CD4-positive, alpha-beta memory T cell (primary cell): ENCODE measurements at regions of chr2 and their contacts with region 1.

Region 1: DNA sequence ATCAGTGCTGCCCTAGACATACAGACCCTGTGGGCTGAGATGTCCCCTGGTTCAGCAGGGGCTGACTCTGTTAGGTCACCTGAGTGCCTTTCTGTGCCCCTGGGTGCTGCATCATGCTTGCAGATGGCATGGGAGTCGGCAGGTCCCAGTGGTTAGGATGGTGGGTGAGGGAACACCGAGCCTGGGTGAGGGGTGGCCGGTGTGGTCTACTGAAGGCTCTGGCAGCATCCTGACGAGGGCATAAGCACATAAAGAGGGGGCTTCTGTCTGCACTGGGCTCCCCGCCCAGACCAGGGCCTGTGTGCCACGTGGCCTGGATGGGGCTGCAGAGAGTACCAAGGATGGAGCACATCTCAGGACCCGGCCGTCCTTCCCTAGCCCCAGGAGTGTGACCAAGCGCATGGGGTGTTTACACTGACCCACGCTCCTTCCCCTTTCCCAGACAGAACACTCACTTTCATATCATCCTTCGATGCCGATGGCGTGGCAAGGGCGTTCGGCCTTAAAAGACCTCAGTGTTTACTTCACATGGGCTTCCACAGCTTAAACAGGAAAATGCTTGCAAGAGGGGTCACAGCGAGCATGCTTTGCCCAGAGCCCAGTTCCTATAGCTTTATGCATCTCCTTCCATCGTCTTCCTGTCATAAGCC is 115.1 kb downstream of the STPG4 start:
- DNase-seq: no peak
- H3K4me3 ChIP-seq: no peak overlapping the region
- H3K4me3 Mint-ChIP-seq: no peak overlapping the region
- H3K27ac ChIP-seq: no peak overlapping the region
- H3K27ac Mint-ChIP-seq: peak overlapping the region in 1 of 7 donors; percentile 60
- H3K4me1 ChIP-seq: no peaks in the 10 kb centered on the region
- H3K4me1 Mint-ChIP-seq: peaks cover 3 to 18% (median 9%) of the 10 kb centered on the region in 4 donors
- H3K27me3 ChIP-seq: no peaks in the 10 kb centered on the region
- H3K27me3 Mint-ChIP-seq: no peaks in the 10 kb centered on the region

Region 2: DNA sequence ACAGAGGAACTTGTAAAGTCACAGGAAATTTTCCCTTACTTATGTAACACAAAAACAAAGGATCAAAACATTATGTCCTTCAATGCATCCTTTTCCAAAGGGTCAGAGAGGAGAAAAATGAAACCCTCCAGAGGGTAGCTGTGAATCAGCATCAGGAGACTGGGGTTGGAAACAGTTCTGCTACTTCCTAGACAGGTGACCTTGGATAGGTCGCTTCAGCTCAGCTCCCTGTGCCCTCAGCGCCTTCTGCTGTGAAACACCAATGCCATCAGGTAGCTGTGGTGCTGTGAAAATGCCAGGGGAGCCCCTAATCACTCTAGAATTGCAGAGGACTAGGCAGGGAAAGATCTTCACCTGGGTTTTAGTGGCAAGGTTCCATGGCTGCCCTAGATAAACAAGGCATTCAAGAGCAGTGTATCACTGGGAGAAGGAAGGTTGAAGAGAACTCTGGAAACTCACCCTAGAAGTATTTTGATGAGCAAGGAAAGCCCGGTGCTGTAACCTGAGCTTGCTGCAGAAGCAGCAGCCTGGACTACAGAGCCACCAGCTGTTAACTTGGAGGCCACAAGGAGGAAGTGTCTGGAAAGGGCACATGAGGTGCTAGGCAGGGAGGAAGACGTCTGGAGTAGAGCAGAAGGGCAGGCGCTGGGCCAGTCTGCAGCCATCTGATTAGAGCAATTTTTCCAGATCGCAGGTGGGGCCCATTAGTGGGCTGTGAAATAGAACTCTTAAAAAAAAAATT is 23.7 kb before region 1 on chr2:
- CTCF ChIA-PET with region 1: no interaction called
- POLR2A ChIA-PET with region 1: no interaction called
- intact Hi-C with region 1: loop called (anchors 1 kb)
- DNase-seq: no peak
- H3K4me3 ChIP-seq: no peak overlapping the region
- H3K4me3 Mint-ChIP-seq: no peak overlapping the region
- H3K27ac ChIP-seq: no peak overlapping the region
- H3K27ac Mint-ChIP-seq: peak overlapping the region in 4 of 7 donors; percentile 4 to 57 (median 25)
- H3K4me1 ChIP-seq: no peaks in the 10 kb centered on the region
- H3K4me1 Mint-ChIP-seq: peaks cover 4 to 8% (median 4%) of the 10 kb centered on the region in 4 donors
- H3K27me3 ChIP-seq: no peaks in the 10 kb centered on the region
- H3K27me3 Mint-ChIP-seq: no peaks in the 10 kb centered on the region